Psoas muscle (tissue), 8 donors: ENCODE measurements at regions of chr12 and their contacts with region 1.

Region 1: GRCh38 chr12:76470028-76470939 is 89.3 kb downstream of the OSBPL8 start:
- DNase-seq: no peak
- ATAC-seq: peak; percentile 99
- H3K4me3 ChIP-seq: peak overlapping the region; percentile 22
- H3K27ac ChIP-seq: peak overlapping the region; percentile 76
- H3K4me1 ChIP-seq: peaks cover 40% of the 10 kb centered on the region
- H3K27me3 ChIP-seq: no peaks in the 10 kb centered on the region
- CTCF ChIP-seq: no peak

Region 2: GRCh38 chr12:76422543-76423438 is 47.5 kb before region 1 on chr12:
- intact Hi-C with region 1: no loop called
- DNase-seq: no peak
- ATAC-seq: no peak
- H3K4me3 ChIP-seq: no peak overlapping the region
- H3K27ac ChIP-seq: no peak overlapping the region
- H3K4me1 ChIP-seq: no peaks in the 10 kb centered on the region
- H3K27me3 ChIP-seq: no peaks in the 10 kb centered on the region
- CTCF ChIP-seq: no peak

Region 3: DNA sequence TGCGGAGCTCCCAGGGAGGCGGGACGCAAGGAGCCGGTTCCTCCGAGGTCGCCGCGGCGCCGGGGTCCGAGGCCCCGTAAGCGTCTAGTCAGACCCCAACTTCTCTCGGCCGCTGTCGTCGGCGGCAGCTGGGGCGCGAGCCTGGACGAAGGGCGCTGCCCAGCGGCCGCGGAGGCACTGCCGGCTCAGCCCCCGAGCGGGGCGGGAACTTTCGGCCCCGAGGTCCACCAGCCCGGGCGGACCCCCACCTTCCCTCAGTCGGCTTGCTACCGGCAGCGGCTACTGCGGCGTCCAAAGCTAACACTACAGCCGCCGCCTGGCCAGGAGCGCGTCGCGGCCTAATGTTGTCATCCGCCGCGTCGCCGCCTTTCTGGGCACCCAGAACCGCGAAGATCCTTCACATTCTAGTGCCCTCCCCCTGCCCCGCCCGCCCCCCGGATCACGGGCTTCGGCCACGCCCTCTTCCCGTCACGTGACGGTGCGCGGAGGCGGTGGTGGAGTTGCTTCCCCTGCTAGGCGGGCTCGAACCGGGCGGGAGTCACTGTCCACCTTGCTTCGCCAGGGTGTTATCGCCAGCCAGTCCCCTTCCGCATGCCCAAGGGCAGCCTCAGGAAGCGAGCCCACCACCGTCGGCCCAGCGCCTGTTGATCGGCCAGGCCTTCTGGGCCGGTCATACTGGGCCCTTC is 89.3 kb after region 1 on chr12 and contains the start of gene OSBPL8:
- intact Hi-C with region 1: loop called in 1 of 2 experiments (anchors 5 kb)
- DNase-seq: peak; percentile 97 to 98
- ATAC-seq: peak; percentile 94 to 96 (median 96)
- H3K4me3 ChIP-seq: peak within 1 kb of the TSS; percentile 99
- H3K27ac ChIP-seq: peak within 1 kb of the TSS; percentile 99
- H3K4me1 ChIP-seq: peaks cover 32% of the 10 kb centered on the region
- H3K27me3 ChIP-seq: no peaks in the 10 kb centered on the region
- CTCF ChIP-seq: peak; percentile 27
- total RNA-seq, gene OSBPL8: 39.5 to 64.3 (median 55.4) TPM